Head of caudate nucleus (tissue), 42 donors: ENCODE measurements at regions of chr4 and their contacts with region 1.

Region 1: DNA sequence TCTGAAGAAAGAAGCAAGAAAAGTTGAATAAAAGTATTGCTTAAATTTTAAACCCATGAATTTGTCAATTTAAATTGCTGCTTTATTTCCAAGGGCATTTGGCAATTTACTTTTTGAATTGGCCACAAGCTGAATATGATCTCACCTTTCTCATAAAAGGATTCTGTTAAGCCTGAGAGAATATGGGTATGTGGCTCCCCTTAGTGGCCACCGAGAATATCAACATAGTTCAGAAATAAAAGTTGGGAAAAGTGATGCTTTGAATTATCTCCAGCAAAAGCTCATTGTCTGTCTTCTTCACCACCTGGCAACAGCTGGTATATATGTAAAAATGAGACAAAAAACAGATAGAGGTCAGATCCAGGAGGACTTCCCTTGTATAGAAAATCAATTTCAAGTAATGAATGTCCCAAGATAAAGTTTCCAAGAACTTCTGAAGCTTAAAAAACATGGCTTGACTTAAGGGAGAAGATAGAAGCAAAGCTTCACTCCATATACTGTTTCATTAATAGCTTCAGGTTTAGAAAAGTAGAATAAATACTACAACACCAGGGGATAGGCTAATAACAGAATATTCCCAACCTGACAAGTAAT is 290.7 kb upstream of the FAM241A start:
- DNase-seq: peak in 30 of 42 donors; percentile 7 to 80 (median 48)

Region 2: DNA sequence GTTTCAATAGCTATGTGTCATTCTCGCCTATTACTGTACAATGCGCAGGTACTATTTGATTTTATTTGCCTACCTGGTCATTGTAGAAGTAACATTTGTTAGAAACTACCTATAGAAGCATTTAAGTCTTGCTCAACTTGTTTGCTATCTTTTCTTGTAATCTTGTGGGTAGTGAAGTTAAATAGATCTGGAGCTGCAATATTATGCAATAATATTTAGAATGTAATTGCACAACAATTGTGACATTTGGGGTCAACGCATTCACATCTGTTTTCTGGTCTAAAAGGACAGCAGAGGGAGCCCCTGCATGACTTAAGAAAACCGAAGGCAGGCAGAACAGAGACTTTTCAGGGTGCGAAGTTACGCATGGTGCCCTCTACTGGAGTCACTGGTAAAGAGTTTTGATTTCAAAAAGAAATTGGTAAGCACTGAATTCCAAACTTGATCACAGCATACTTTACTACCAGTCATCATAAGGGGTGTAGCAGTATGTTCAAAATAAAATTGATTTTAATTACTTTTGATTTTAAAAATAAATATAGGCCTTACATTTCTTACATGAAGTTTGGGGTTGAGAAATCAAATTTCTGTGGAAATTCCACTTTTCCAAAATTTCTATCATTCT is 212.5 kb before region 1 on chr4:
- intact Hi-C with region 1: loop called (anchors 5 kb)
- DNase-seq: peak; percentile 31 to 90 (median 73)

Region 3: DNA sequence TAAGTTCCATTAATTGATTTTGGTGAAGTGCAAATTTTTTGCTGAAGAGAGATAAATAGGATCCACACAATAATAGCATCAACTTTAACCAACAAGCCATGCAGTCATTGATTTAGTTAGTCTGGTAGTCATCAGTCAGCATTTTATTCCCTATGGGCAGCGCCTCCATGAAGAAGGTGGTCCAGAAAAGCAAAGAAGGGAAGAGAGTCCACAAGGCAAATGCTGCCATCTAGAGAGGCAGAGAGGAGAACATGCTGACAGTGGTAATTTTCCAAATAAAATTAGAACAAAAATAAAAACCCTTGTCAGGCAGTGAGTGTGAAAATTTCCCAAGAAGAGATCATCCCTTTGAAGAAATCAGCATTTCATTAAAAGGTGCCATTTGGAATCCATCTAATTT is 76.0 kb before region 1 on chr4:
- intact Hi-C with region 1: no loop called
- DNase-seq: no peak

Region 4: GRCh38 chr4:111991163-111991562 is 136.6 kb after region 1 on chr4:
- intact Hi-C with region 1: no loop called
- DNase-seq: no peak